H1 (cell line): ENCODE measurements at regions of chr7 and their contacts with region 1.

Region 1: GRCh38 chr7:55144333-55145317 is 125.8 kb downstream of the EGFR start:
- DNase-seq: peak in 1 of 2 experiments; percentile 75
- H3K4me3 ChIP-seq: no peak overlapping the region
- H3K27ac ChIP-seq: no peak overlapping the region
- H3K4me1 ChIP-seq: no peaks in the 10 kb centered on the region
- H3K27me3 ChIP-seq: no peaks in the 10 kb centered on the region
- CTCF ChIP-seq: peak; percentile 58 to 72 (median 65)
- EP300 ChIP-seq: no peak
- POLR2A ChIP-seq: no peak
- RAD21 ChIP-seq: peak; percentile 53 to 65

Region 2: DNA sequence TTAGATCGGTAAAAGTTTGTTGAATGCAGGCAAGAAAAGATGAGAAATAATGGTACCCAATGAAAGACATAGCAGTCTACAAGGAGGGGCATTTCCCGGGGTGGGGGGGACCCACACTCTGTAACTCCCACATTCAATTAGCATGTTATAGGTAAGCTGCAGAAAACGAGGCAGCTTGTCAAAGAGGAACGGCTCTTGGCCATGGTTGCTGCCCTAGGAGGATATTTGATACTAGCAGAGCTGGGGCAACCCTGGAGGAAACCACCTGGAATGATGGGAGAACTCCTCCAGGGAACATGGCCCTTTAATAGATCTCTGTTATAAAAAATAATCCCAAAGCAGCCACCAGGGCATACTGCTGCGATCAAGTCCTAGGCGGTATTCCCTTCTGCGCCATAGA is 27.3 kb before region 1 on chr7:
- CTCF ChIA-PET with region 1: no interaction called
- POLR2A ChIA-PET with region 1: no interaction called
- DNase-seq: no peak
- H3K4me3 ChIP-seq: no peak overlapping the region
- H3K27ac ChIP-seq: no peak overlapping the region
- H3K4me1 ChIP-seq: no peaks in the 10 kb centered on the region
- H3K27me3 ChIP-seq: no peaks in the 10 kb centered on the region
- CTCF ChIP-seq: no peak
- EP300 ChIP-seq: no peak
- POLR2A ChIP-seq: no peak
- RAD21 ChIP-seq: no peak

Region 3: DNA sequence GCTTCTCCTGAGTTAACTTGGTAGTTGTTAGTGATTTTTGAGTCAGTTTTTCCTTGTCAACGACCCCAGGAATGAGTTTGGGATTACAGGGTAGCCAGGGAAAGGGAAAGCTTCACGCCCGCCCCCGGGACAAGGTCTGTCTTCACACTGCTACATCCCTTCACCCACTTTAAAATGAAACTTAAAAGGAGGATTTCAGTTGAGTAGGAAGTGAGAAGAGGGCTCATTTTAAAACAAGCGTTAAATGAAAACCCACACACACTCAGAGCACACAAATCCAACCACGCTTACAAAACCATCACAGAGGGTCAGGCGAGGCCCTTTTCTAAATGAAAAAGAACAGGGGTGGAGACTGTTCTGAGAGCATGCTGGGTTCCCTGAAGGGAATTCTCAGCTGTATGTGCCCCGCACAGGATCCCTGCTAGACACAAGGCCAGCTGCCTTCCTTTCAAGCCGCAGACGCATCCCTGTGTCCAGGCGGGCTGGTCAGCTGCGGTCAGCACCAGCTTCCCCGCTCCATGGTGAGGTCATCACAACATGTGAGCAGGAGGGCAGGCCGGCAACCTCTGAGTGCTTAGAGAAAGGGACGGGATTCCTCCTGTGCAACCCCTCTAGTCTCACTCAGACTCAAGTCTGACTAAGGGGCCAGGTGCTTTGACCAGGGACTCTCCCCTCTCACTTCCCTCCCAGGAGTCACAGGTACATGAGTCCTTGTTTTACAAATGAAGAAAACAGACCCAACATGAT is 14.1 kb before region 1 on chr7:
- CTCF ChIA-PET with region 1: interaction called, 12 read pairs
- POLR2A ChIA-PET with region 1: no interaction called
- DNase-seq: no peak
- H3K4me3 ChIP-seq: no peak overlapping the region
- H3K27ac ChIP-seq: no peak overlapping the region; the same call in 1 of the 2 replicates
- H3K4me1 ChIP-seq: peaks cover 0 to 6% (median under 1%) of the 10 kb centered on the region in 4 experiments; a peak in 4 of 7 replicates
- H3K27me3 ChIP-seq: no peaks in the 10 kb centered on the region
- CTCF ChIP-seq: no peak
- EP300 ChIP-seq: no peak
- POLR2A ChIP-seq: no peak
- RAD21 ChIP-seq: no peak

Region 4: GRCh38 chr7:55158541-55159382 is 14.1 kb after region 1 on chr7:
- CTCF ChIA-PET with region 1: interaction called, 15 read pairs
- POLR2A ChIA-PET with region 1: no interaction called
- DNase-seq: no peak
- H3K4me3 ChIP-seq: no peak overlapping the region
- H3K27ac ChIP-seq: no peak overlapping the region
- H3K4me1 ChIP-seq: no peaks in the 10 kb centered on the region; a peak in 1 of 7 replicates
- H3K27me3 ChIP-seq: no peaks in the 10 kb centered on the region
- CTCF ChIP-seq: no peak
- EP300 ChIP-seq: no peak
- POLR2A ChIP-seq: no peak
- RAD21 ChIP-seq: no peak